ENCODE measurements at regions of chr15 and their contacts with region 1.

Region 1: GRCh38 chr15:85407804-85408746 is 27.7 kb downstream of the AKAP13 start:
- DNase-seq: no peak
- ATAC-seq: peak; percentile 84
- H3K4me3 ChIP-seq: no peak overlapping the region
- H3K27ac ChIP-seq: peak overlapping the region; percentile 83 to 84
- H3K4me1 ChIP-seq: peaks cover 5 to 15% of the 10 kb centered on the region in 2 donors
- H3K27me3 ChIP-seq: peaks cover 0 to 1% of the 10 kb centered on the region in 2 donors

Region 2: GRCh38 chr15:85330901-85331588 is 77.0 kb before region 1 on chr15:
- intact Hi-C with region 1: loop called in 1 of 2 experiments (anchors 10 kb)
- DNase-seq: peak; percentile 89 to 90
- ATAC-seq: peak; percentile 91
- H3K4me3 ChIP-seq: no peak overlapping the region
- H3K27ac ChIP-seq: peak overlapping the region in 1 of 2 donors; percentile 62
- H3K4me1 ChIP-seq: no peaks in the 10 kb centered on the region
- H3K27me3 ChIP-seq: no peaks in the 10 kb centered on the region

Region 3: GRCh38 chr15:85494048-85494793 is 86.1 kb after region 1 on chr15:
- intact Hi-C with region 1: no loop called
- DNase-seq: no peak
- ATAC-seq: peak; percentile 44
- H3K4me3 ChIP-seq: no peak overlapping the region
- H3K27ac ChIP-seq: no peak overlapping the region
- H3K4me1 ChIP-seq: no peaks in the 10 kb centered on the region
- H3K27me3 ChIP-seq: no peaks in the 10 kb centered on the region

Measured in aorta (tissue), 5 donors.